ENCODE measurements at regions of chr2 and their contacts with region 1.

Region 1: DNA sequence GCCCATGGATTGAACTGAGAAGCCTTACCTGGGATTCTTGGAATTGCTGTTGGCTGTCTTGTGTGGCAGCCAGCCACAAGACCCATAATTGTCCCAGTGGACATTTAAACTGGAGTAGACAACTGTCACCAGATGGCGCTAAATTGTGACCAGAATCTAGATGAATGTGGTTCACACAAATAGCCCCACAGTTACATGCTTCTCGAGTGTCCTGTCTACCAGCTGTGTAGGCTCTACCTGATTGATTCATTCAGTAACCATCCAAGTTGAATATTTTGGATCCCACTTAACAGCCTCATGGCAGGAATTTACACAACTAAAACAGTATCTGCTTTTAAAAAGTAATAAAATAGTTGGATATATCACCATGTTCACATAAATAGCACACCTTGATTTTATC is 73.2 kb downstream of the MAP4K4 start:
- DNase-seq: peak; percentile 67 to 70
- H3K4me3 ChIP-seq: no peak overlapping the region
- H3K4me3 Mint-ChIP-seq: no peak overlapping the region
- H3K27ac Mint-ChIP-seq: peak overlapping the region; percentile 72
- H3K4me1 ChIP-seq: peaks cover 50% of the 10 kb centered on the region
- H3K4me1 Mint-ChIP-seq: peaks cover 56% of the 10 kb centered on the region
- H3K27me3 ChIP-seq: no peaks in the 10 kb centered on the region
- H3K27me3 Mint-ChIP-seq: no peaks in the 10 kb centered on the region
- CTCF ChIP-seq: peak; percentile 43 to 56

Region 2: DNA sequence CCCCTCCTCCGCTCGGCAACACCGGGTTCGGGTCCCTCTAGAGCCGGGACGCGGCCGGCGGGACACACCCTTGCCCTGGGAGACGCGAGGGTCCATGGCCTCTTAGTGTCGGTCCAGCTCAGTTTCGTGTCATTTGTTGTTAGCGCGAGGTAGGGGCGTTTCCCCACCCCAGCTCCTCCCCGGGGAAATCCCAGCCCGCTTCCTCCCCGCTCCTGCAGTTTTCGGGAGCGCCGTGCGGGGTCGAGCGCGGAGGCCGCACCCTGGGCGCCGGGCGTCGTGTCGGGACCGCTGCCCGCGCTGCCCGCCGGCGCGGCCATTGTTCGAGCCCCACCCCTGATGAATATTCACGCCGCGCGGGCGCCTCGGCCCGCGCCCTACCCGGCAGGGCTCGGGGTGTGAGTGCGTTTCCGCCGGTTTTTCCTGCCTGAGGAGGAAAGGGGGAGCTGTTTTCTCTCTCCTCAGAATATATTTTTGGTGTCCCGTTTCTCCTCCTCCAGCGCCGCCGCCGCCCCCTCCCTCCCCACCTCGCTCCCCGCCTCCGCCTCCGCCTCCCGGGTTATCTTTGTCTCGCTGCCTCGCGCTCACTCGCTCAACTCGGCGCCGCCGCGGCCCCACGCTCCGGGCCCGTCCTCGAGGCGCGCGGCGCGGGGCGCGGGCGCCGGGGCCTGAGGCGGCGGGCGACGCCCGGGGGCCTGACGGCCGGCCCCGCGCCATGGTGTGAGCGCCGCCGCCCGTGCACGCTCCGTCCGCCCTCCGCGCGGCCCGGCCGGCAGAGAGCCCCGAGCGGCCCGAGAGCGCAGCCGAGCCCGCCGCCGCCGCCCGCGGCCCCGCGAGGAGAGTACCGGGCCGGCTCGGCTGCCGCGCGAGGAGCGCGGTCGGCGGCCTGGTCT is 73.4 kb before region 1 on chr2 and contains the start of gene MAP4K4:
- CTCF ChIA-PET with region 1: interaction called, 4 read pairs
- POLR2A ChIA-PET with region 1: interaction called, 4 read pairs
- intact Hi-C with region 1: loop called (anchors 2 kb)
- DNase-seq: peak; percentile 86 to 87
- H3K4me3 ChIP-seq: peak within 1 kb of the TSS; percentile 47
- H3K4me3 Mint-ChIP-seq: no peak within 1 kb of the TSS
- H3K27ac Mint-ChIP-seq: peak within 1 kb of the TSS; percentile 82
- H3K4me1 ChIP-seq: peaks cover 27% of the 10 kb centered on the region
- H3K4me1 Mint-ChIP-seq: peaks cover 17% of the 10 kb centered on the region
- H3K27me3 ChIP-seq: no peaks in the 10 kb centered on the region
- H3K27me3 Mint-ChIP-seq: no peaks in the 10 kb centered on the region
- CTCF ChIP-seq: peak in 1 of 2 experiments; percentile 25
- total RNA-seq, gene MAP4K4: 257 and 263 TPM in 2 replicates

Region 3: DNA sequence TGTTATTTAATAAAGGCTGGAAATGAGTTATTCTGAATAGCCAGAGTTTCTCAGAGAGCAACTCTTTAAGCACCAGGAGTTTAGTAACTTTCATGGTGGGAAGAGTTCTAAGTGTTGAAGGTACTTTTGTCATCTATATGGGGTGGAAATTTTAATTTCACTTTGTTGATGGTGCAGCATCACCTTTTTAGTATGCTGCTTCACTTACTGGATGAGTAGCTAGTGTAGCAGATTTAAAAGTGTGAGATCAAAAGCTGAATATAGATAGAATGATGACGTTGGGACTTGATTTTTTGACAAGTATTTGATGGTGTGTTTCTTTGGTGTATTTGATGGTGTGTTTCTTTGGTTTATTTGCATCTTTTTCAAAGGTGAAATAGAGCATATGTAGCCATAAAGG is 25.9 kb before region 1 on chr2:
- CTCF ChIA-PET with region 1: interaction called, 3 read pairs
- POLR2A ChIA-PET with region 1: interaction called, 24 read pairs
- intact Hi-C with region 1: no loop called
- DNase-seq: no peak
- H3K4me3 ChIP-seq: no peak overlapping the region
- H3K4me3 Mint-ChIP-seq: no peak overlapping the region
- H3K27ac Mint-ChIP-seq: peak overlapping the region; percentile 63
- H3K4me1 ChIP-seq: peaks cover 63% of the 10 kb centered on the region
- H3K4me1 Mint-ChIP-seq: peaks cover 59% of the 10 kb centered on the region
- H3K27me3 ChIP-seq: no peaks in the 10 kb centered on the region
- H3K27me3 Mint-ChIP-seq: no peaks in the 10 kb centered on the region
- CTCF ChIP-seq: no peak

Region 4: GRCh38 chr2:101751875-101752619 is 18.7 kb before region 1 on chr2:
- CTCF ChIA-PET with region 1: interaction called, 4 read pairs
- POLR2A ChIA-PET with region 1: no interaction called
- intact Hi-C with region 1: loop called (anchors 1 kb)
- DNase-seq: no peak
- H3K4me3 ChIP-seq: no peak overlapping the region
- H3K4me3 Mint-ChIP-seq: no peak overlapping the region
- H3K27ac Mint-ChIP-seq: peak overlapping the region; percentile 46
- H3K4me1 ChIP-seq: peaks cover 69% of the 10 kb centered on the region
- H3K4me1 Mint-ChIP-seq: peaks cover 46% of the 10 kb centered on the region
- H3K27me3 ChIP-seq: no peaks in the 10 kb centered on the region
- H3K27me3 Mint-ChIP-seq: no peaks in the 10 kb centered on the region
- CTCF ChIP-seq: no peak

Region 5: GRCh38 chr2:101805152-101806088 is 34.7 kb after region 1 on chr2:
- CTCF ChIA-PET with region 1: interaction called, 3 read pairs
- POLR2A ChIA-PET with region 1: no interaction called
- intact Hi-C with region 1: loop called (anchors 1 kb)
- DNase-seq: no peak
- H3K4me3 ChIP-seq: no peak overlapping the region
- H3K4me3 Mint-ChIP-seq: peak overlapping the region; percentile 56
- H3K27ac Mint-ChIP-seq: peak overlapping the region; percentile 63
- H3K4me1 ChIP-seq: peaks cover 58% of the 10 kb centered on the region
- H3K4me1 Mint-ChIP-seq: peaks cover 54% of the 10 kb centered on the region
- H3K27me3 ChIP-seq: no peaks in the 10 kb centered on the region
- H3K27me3 Mint-ChIP-seq: no peaks in the 10 kb centered on the region
- CTCF ChIP-seq: no peak

Region 6: GRCh38 chr2:101831351-101831865 is 60.7 kb after region 1 on chr2:
- CTCF ChIA-PET with region 1: interaction called, 3 read pairs
- POLR2A ChIA-PET with region 1: no interaction called
- intact Hi-C with region 1: loop called (anchors 1 kb)
- DNase-seq: peak; percentile 80
- H3K4me3 ChIP-seq: no peak overlapping the region
- H3K4me3 Mint-ChIP-seq: no peak overlapping the region
- H3K27ac Mint-ChIP-seq: peak overlapping the region; percentile 66
- H3K4me1 ChIP-seq: peaks cover 33% of the 10 kb centered on the region
- H3K4me1 Mint-ChIP-seq: peaks cover 41% of the 10 kb centered on the region
- H3K27me3 ChIP-seq: no peaks in the 10 kb centered on the region
- H3K27me3 Mint-ChIP-seq: no peaks in the 10 kb centered on the region
- CTCF ChIP-seq: peak; percentile 64 to 90